SK-N-SH (cell line): ENCODE measurements at regions of chr7 and their contacts with region 1.

Region 1: DNA sequence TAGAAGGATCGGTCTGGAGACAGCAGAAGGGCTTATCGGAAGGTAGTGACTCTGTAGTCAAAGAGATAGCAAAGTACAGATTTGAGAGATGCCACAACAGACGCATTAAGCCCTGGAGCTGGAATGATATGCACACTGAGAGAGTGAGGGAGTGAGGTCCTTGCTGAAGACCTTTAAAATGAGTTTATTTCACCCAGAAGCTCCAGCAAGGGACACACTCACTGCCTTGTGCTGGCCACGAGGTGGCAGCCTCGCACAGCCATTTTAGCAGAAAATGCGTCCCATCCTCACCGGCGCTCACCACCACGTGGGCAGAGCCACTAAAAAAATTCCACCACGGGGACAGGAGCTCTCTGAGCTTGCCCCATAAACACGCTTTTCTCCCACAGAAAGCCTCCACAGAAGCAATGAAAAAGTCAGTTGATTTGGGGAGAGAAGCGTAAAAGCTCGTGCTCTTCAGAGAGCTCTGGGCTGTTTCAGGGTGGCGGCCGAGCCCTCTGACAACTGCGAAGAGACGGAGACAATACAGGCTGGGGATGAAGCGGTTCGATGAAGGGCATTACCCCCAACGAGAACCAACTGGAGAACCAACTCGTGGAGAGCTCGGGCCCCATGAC is 163.0 kb upstream of the KLF14 start:
- DNase-seq: peak; percentile 86
- H3K4me3 ChIP-seq: peak overlapping the region in 1 of 2 experiments; percentile 1; a peak in 1 of 4 replicates
- H3K27ac ChIP-seq: peak overlapping the region; percentile 9 to 100; a peak in 3 of 4 replicates
- H3K4me1 ChIP-seq: peaks cover 9 to 68% of the 10 kb centered on the region in 2 experiments
- H3K27me3 ChIP-seq: no peaks in the 10 kb centered on the region
- CTCF ChIP-seq: peak; percentile 90
- EP300 ChIP-seq: no peak
- RAD21 ChIP-seq: peak; percentile 95

Region 2: DNA sequence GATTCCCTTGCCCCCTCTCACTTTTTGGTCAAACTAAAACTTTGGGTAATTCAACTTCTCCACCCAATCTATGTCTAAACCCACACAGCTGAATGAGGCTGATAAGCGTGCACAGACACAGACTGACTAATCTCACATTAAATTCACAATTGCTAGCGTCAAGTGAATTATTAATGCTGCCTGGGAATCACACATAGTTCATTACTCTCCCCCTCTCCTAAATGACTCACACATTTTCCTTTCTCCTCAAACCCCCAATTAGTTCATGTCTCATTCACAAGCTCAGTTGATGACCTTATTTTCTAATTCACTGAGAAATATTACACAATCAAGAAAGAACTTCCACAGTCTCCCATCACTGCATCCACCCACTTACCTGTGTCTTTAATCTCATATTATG is 177.5 kb before region 1 on chr7:
- CTCF ChIA-PET with region 1: no interaction called
- POLR2A ChIA-PET with region 1: no interaction called
- DNase-seq: no peak
- H3K4me3 ChIP-seq: no peak overlapping the region
- H3K27ac ChIP-seq: no peak overlapping the region
- H3K4me1 ChIP-seq: no peaks in the 10 kb centered on the region; a peak in 1 of 4 replicates
- H3K27me3 ChIP-seq: peaks cover 24% of the 10 kb centered on the region; the same call in 1 of the 2 replicates
- CTCF ChIP-seq: no peak
- EP300 ChIP-seq: no peak
- RAD21 ChIP-seq: no peak

Region 3: GRCh38 chr7:130804220-130804619 is 92.8 kb before region 1 on chr7:
- CTCF ChIA-PET with region 1: no interaction called
- POLR2A ChIA-PET with region 1: no interaction called
- DNase-seq: no peak
- H3K4me3 ChIP-seq: no peak overlapping the region
- H3K27ac ChIP-seq: no peak overlapping the region; a peak in 1 of 4 replicates
- H3K4me1 ChIP-seq: peaks cover 0 to 7% of the 10 kb centered on the region in 2 experiments; a peak in 1 of 4 replicates
- H3K27me3 ChIP-seq: no peaks in the 10 kb centered on the region; the same call in 1 of the 2 replicates
- CTCF ChIP-seq: no peak
- EP300 ChIP-seq: no peak
- RAD21 ChIP-seq: no peak

Region 4: DNA sequence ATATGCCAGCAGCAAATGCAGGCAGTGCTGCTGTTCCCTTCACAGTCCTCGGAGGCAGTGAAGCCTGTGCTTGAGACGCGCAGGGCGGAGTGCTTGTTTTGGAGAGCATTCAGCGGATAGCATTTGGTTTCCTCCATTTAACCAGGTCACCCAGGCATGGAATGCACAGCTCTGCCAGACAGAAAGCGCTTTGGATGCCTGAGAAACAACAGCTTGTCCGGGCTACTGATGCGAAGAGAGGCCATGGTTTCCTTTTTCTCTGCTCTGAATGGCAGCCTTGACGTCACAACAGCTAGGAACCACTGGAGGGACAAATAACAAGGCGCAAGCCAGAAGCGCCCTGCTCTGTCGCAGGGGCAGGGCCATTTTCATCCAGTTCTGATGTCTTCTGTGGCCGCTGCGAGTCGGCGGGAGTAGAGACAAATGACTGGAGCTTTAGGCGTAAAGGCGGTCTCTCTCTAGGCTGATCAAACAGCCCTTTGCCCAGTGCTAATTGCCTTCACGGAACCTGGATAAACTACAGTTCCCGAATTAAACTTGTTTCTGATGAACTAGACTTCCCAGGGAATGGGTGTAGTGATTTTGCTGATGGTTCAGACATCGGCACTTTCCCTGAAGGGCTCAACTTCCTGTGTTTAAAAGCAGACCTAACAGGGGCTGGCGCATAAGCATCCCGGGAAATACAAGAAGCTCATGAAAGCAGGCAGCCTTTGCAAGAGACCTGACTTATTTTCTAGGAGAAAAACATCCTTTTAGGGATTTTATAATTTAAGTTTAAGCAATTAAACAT is 24.6 kb after region 1 on chr7:
- CTCF ChIA-PET with region 1: interaction called, 36 read pairs
- POLR2A ChIA-PET with region 1: no interaction called
- DNase-seq: no peak
- H3K4me3 ChIP-seq: no peak overlapping the region
- H3K27ac ChIP-seq: peak overlapping the region; percentile 7 to 100; a peak in 2 of 4 replicates
- H3K4me1 ChIP-seq: peaks cover 4 to 91% of the 10 kb centered on the region in 2 experiments
- H3K27me3 ChIP-seq: no peaks in the 10 kb centered on the region
- CTCF ChIP-seq: no peak
- EP300 ChIP-seq: no peak
- RAD21 ChIP-seq: no peak

Region 5: GRCh38 chr7:130947792-130948580 is 51.0 kb after region 1 on chr7:
- CTCF ChIA-PET with region 1: interaction called, 21 read pairs
- POLR2A ChIA-PET with region 1: no interaction called
- DNase-seq: no peak
- H3K4me3 ChIP-seq: no peak overlapping the region
- H3K27ac ChIP-seq: no peak overlapping the region
- H3K4me1 ChIP-seq: peaks cover 0 to 22% of the 10 kb centered on the region in 2 experiments; a peak in 2 of 4 replicates
- H3K27me3 ChIP-seq: no peaks in the 10 kb centered on the region
- CTCF ChIP-seq: no peak
- EP300 ChIP-seq: no peak
- RAD21 ChIP-seq: no peak

Region 6: GRCh38 chr7:130982160-130982638 is 85.2 kb after region 1 on chr7:
- CTCF ChIA-PET with region 1: interaction called, 45 read pairs
- POLR2A ChIA-PET with region 1: no interaction called
- DNase-seq: peak; percentile 54
- H3K4me3 ChIP-seq: no peak overlapping the region
- H3K27ac ChIP-seq: no peak overlapping the region
- H3K4me1 ChIP-seq: peaks cover 0 to 13% of the 10 kb centered on the region in 2 experiments; a peak in 2 of 4 replicates
- H3K27me3 ChIP-seq: no peaks in the 10 kb centered on the region
- CTCF ChIP-seq: peak; percentile 97
- EP300 ChIP-seq: no peak
- RAD21 ChIP-seq: peak; percentile 86

Region 7: DNA sequence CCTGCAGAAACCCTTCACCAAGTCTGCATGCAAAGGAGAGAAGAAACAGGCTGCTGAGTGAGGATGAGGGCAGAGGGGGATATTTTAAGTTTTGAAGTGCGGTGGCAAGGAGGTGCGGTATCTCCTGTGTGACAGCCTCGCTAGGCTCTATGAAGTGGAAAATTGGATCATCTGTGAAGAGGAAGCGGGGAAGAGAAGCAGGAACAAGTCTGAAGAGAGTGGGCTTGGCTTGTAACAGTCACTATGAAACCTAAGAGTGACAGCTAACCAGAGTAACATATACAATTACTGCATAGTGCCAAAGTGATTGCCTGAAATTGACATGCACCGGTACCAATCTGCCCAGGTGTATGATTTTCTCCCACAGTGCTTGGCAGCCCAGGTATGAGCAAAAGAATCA is 124.5 kb after region 1 on chr7:
- CTCF ChIA-PET with region 1: interaction called, 33 read pairs
- POLR2A ChIA-PET with region 1: no interaction called
- DNase-seq: no peak
- H3K4me3 ChIP-seq: no peak overlapping the region
- H3K27ac ChIP-seq: no peak overlapping the region
- H3K4me1 ChIP-seq: peaks cover 0 to 3% of the 10 kb centered on the region in 2 experiments; a peak in 1 of 4 replicates
- H3K27me3 ChIP-seq: no peaks in the 10 kb centered on the region
- CTCF ChIP-seq: no peak
- EP300 ChIP-seq: no peak
- RAD21 ChIP-seq: no peak

Region 8: DNA sequence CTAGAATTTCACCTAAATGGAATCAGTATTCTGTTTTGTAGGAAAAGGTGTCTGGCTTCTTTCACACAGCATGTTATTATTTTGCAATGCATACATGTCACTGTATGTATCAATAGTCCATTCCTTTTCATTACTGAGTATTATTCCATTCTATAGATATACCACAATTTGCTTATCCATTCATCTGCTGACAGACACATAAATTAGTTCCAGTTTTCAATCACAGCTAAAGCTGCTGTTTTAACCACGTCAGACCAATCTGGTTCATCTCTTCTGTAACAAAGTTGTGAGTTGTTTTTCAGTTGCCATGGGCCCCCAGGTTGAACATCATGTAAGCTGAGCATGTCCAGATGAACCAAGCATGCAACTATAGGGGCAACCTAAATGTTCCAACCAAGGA is 148.5 kb after region 1 on chr7:
- CTCF ChIA-PET with region 1: interaction called, 186 read pairs
- POLR2A ChIA-PET with region 1: no interaction called
- DNase-seq: no peak
- H3K4me3 ChIP-seq: no peak overlapping the region
- H3K27ac ChIP-seq: no peak overlapping the region
- H3K4me1 ChIP-seq: peaks cover 0 to 2% of the 10 kb centered on the region in 2 experiments; a peak in 2 of 4 replicates
- H3K27me3 ChIP-seq: no peaks in the 10 kb centered on the region
- CTCF ChIP-seq: no peak
- EP300 ChIP-seq: no peak
- RAD21 ChIP-seq: no peak

Region 9: DNA sequence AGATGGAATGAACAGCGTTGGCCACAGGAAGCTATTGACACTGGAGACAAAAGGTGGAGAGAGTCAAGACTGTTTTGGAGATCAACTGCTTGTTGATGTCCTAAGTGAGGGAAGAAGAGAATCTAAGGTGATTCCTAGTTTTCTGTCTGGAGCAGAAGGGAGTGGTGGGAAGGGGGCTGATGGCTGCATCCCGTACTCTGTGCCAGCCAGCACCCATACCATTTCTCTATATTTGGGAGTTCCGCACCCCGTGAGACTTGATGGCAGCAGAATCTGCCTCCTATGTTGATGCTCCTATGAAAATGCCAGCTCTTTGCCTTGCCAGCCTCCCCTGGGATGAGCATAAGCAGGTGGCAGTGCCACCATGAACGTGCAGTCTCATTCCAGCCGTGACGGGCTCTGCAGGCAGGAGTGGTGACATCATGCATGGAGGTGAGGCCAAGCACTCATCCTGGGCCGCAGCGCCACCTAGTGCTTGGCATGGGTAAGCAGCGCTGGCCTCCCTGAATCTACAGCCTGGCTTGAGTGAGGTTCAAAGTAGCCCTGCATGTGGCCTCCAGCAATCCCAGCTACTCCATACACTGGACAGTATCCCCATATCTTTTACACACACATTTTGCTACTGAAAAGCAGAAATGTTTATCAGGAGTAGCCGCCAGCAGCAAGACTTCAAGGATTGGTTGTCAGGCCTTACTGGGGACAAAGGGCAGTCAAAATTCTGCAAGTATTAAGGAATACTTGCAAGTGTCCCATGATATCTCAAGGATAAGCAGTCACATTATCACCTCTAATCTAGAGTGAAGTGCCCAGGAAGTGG is 616.4 kb after region 1 on chr7:
- CTCF ChIA-PET with region 1: interaction called, 14 read pairs
- POLR2A ChIA-PET with region 1: no interaction called
- DNase-seq: peak; percentile 92
- H3K4me3 ChIP-seq: peak overlapping the region in 1 of 2 experiments; percentile 21; a peak in 2 of 4 replicates
- H3K27ac ChIP-seq: peak overlapping the region; percentile 2 to 41; a peak in 2 of 4 replicates
- H3K4me1 ChIP-seq: peaks cover 4 to 7% of the 10 kb centered on the region in 2 experiments; a peak in 2 of 4 replicates
- H3K27me3 ChIP-seq: no peaks in the 10 kb centered on the region
- CTCF ChIP-seq: peak; percentile 100
- EP300 ChIP-seq: no peak
- RAD21 ChIP-seq: peak; percentile 89